Right lobe of liver (tissue), 6 donors: ENCODE measurements at regions of chr17 and their contacts with region 1.

Region 1: DNA sequence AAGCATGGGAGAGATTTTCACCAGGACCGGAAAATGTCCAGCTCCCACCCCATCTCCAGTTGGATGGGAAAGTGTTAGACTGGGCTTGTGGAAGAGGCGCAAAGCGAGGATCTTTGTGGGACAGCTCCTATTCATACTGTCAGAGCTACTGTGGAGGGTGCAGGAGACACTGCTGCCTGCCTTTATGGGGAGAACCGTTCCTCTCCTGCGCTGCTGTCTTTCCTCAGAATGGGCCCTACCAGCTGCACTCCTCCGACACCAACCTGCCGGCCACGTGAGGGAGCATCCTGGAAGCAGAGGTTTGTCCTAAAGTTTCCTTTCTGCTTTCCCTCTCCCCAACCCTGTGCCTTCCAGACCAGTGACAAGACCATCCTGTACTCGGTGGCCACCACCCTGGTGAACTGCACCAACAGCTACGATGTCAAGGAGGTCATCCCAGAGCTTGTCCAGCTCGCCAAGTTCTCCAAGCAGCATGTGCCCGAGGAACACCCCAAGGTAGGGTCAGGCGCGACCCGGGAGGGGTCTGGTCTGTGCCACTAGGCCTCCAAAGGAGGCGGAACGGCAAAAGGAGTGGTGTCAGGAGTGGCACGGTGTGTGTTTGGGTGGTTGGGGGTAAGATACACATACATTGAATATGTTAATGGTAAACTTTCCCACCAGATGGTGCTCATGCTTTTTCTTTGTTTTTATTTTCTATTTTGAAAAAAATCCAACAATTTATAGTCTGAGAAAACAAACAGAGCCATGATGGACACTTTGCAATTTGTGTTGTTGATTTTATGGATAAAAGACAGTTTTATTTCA is 23.0 kb downstream of the SLC35G3 start:
- DNase-seq: no peak
- ATAC-seq: peak in 2 of 4 donors; percentile 23 to 50
- H3K4me3 ChIP-seq: no peak overlapping the region
- H3K27ac ChIP-seq: no peak overlapping the region
- H3K4me1 ChIP-seq: no peaks in the 10 kb centered on the region
- H3K27me3 ChIP-seq: no peaks in the 10 kb centered on the region
- CTCF ChIP-seq: peak in 3 of 4 donors; percentile 9 to 27 (median 19)
- POLR2A ChIP-seq: no peak

Region 2: GRCh38 chr17:35132099-35132746 is 38.9 kb before region 1 on chr17:
- intact Hi-C with region 1: no loop called
- DNase-seq: no peak
- ATAC-seq: peak in 2 of 4 donors; percentile 41 to 59
- H3K4me3 ChIP-seq: no peak overlapping the region
- H3K27ac ChIP-seq: no peak overlapping the region
- H3K4me1 ChIP-seq: no peaks in the 10 kb centered on the region
- H3K27me3 ChIP-seq: no peaks in the 10 kb centered on the region
- CTCF ChIP-seq: no peak
- POLR2A ChIP-seq: no peak

Region 3: DNA sequence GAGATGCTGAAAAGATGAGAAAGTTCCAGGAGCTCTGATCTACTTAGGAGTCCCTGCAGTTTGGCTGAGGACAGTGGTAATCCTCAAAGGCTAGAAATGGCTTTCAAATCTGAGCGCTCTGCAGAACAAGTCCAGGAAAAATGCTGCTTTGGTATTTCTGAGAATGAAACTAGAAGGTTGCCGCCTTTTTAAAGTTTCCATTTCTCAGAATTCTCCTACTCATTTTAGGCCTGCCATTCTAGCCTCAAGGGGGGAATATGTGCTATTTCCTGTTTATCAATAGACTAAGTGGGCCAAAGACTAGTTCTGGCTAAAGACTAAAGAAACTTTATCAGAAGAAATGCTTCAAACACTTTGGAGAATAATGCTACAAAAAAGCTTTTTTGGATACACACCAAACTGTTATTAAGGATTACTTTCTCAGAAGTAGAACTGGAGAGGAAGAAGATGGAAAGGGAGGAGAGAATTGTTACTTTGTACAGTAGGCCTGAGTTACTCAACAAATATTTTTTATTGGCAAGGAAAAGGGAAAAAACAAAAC is 366.5 kb after region 1 on chr17 and contains the start of gene SLFN12L:
- intact Hi-C with region 1: loop called in 1 of 2 experiments (anchors 10 kb)
- DNase-seq: no peak
- ATAC-seq: no peak
- H3K4me3 ChIP-seq: no peak within 1 kb of the TSS
- H3K27ac ChIP-seq: peak within 1 kb of the TSS in 1 of 3 donors; percentile 20
- H3K4me1 ChIP-seq: peaks cover 0 to 24% (median 8%) of the 10 kb centered on the region in 4 donors
- H3K27me3 ChIP-seq: no peaks in the 10 kb centered on the region
- CTCF ChIP-seq: no peak
- POLR2A ChIP-seq: no peak
- total RNA-seq, gene SLFN12L: 0.32 to 2.6 (median 0.69) TPM in 5 of 6 experiments, not detected in the other